Activated CD8-positive, alpha-beta T cell treated with anti-CD3 and anti-CD28 coated beads for 36 hours (primary cell): ENCODE measurements at regions of chr17 and their contacts with region 1.

Region 1: GRCh38 chr17:81683584-81684237 is at the starts of genes ARL16 and HGS:
- DNase-seq: peak; percentile 98
- ATAC-seq: peak; percentile 99
- H3K4me3 Mint-ChIP-seq: peak within 1 kb of the TSS; percentile 93
- H3K27ac Mint-ChIP-seq: peak within 1 kb of the TSS; percentile 85
- H3K4me1 Mint-ChIP-seq: peaks cover 31% of the 10 kb centered on the region
- H3K27me3 Mint-ChIP-seq: no peaks in the 10 kb centered on the region
- CTCF ChIP-seq: no peak
- total RNA-seq, gene ARL16: 22.3 to 23.5 TPM
- total RNA-seq, gene HGS: 98.9 to 113 TPM

Region 2: GRCh38 chr17:81666342-81667191 is 17.1 kb before region 1 on chr17 and contains the starts of genes CCDC137 and OXLD1:
- CTCF ChIA-PET with region 1: interaction called, 4 read pairs
- POLR2A ChIA-PET with region 1: interaction called, 33 read pairs
- intact Hi-C with region 1: no loop called
- DNase-seq: peak; percentile 97
- ATAC-seq: peak; percentile 85
- H3K4me3 Mint-ChIP-seq: peak within 1 kb of the TSS; percentile 88
- H3K27ac Mint-ChIP-seq: peak within 1 kb of the TSS; percentile 99
- H3K4me1 Mint-ChIP-seq: peaks cover 50% of the 10 kb centered on the region
- H3K27me3 Mint-ChIP-seq: no peaks in the 10 kb centered on the region
- CTCF ChIP-seq: no peak
- total RNA-seq, gene CCDC137: 34.1 to 37.2 TPM
- total RNA-seq, gene OXLD1: 50.1 to 52.6 TPM

Region 3: DNA sequence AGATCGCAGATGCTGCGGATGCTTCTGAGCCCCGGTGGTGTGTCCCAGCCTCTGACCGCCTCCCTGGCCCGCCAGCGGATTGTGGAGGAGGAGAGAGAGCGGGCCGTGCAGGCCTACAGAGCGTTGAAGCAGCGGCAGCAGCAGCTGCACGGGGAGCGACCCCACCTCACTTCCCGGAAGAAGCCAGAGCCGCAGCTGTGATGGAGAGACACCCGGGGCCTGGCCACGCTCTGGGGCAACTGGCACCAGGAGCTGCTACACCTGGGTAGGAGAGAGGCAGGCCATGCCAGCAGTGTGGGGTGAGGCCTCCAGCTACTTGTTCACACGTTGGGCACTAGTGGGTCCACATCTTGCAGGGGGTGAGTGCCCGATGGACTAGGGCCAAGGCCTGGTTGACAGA is 11.2 kb before region 1 on chr17:
- CTCF ChIA-PET with region 1: interaction called, 11 read pairs
- POLR2A ChIA-PET with region 1: interaction called, 33 read pairs
- intact Hi-C with region 1: no loop called
- DNase-seq: no peak
- ATAC-seq: no peak
- H3K4me3 Mint-ChIP-seq: no peak overlapping the region
- H3K27ac Mint-ChIP-seq: no peak overlapping the region
- H3K4me1 Mint-ChIP-seq: peaks cover 18% of the 10 kb centered on the region
- H3K27me3 Mint-ChIP-seq: no peaks in the 10 kb centered on the region
- CTCF ChIP-seq: no peak

Region 4: GRCh38 chr17:81702971-81703746 is 19.4 kb after region 1 on chr17 and contains the start of gene MRPL12:
- CTCF ChIA-PET with region 1: interaction called, 10 read pairs
- POLR2A ChIA-PET with region 1: interaction called, 73 read pairs
- intact Hi-C with region 1: no loop called
- DNase-seq: peak; percentile 94
- ATAC-seq: peak; percentile 88
- H3K4me3 Mint-ChIP-seq: peak within 1 kb of the TSS; percentile 94
- H3K27ac Mint-ChIP-seq: peak within 1 kb of the TSS; percentile 96
- H3K4me1 Mint-ChIP-seq: peaks cover 24% of the 10 kb centered on the region
- H3K27me3 Mint-ChIP-seq: no peaks in the 10 kb centered on the region
- CTCF ChIP-seq: no peak
- total RNA-seq, gene MRPL12: 149 to 152 TPM

Region 5: DNA sequence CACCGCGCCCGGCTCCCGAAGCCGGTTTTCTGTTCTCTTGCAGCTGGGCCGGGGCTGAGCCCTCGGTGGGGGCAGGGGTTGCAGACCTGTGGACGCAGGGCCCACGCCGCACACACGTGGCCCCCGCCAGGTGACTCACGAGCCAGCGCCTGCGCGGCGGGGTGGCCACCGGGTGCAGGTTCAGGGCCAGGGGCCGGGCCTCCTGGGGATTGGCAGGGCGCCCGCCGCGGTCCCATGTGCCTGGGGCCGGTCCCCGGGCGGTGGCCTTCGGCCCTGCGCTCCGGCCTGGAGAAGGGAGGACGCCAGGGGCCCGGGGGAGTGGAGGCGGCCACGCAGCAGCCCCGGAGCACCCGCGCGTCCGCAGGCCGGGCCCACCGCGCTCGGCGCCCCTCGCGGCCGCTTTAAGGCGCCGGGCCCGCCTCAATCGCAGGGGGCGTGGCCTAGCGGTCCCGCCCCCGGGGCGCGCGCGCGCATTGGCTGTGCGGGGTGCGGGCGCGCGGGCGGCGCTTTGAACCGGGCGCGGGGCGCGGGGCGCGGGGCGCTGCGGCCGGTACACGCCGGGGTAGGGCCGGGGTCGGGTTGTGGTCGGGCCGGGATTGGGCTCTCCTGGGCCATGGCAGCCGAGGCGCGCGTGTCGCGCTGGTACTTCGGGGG is 28.2 kb after region 1 on chr17 and contains the start of gene SLC25A10:
- CTCF ChIA-PET with region 1: interaction called, 4 read pairs
- POLR2A ChIA-PET with region 1: interaction called, 17 read pairs
- intact Hi-C with region 1: no loop called
- DNase-seq: peak; percentile 88
- ATAC-seq: peak; percentile 85
- H3K4me3 Mint-ChIP-seq: peak within 1 kb of the TSS; percentile 92
- H3K27ac Mint-ChIP-seq: peak within 1 kb of the TSS; percentile 83
- H3K4me1 Mint-ChIP-seq: peaks cover 24% of the 10 kb centered on the region
- H3K27me3 Mint-ChIP-seq: no peaks in the 10 kb centered on the region
- CTCF ChIP-seq: peak; percentile 11
- total RNA-seq, gene SLC25A10: 29.4 to 30.5 TPM